ENCODE measurements at regions of chr3 and their contacts with region 1.

Region 1: GRCh38 chr3:186540221-186540834 is 3.9 kb downstream of the CRYGS start:
- DNase-seq: no peak
- ATAC-seq: peak; percentile 63

Region 2: GRCh38 chr3:186235554-186235953 is 304.8 kb before region 1 on chr3:
- intact Hi-C with region 1: no loop called
- DNase-seq: no peak
- ATAC-seq: no peak

Region 3: DNA sequence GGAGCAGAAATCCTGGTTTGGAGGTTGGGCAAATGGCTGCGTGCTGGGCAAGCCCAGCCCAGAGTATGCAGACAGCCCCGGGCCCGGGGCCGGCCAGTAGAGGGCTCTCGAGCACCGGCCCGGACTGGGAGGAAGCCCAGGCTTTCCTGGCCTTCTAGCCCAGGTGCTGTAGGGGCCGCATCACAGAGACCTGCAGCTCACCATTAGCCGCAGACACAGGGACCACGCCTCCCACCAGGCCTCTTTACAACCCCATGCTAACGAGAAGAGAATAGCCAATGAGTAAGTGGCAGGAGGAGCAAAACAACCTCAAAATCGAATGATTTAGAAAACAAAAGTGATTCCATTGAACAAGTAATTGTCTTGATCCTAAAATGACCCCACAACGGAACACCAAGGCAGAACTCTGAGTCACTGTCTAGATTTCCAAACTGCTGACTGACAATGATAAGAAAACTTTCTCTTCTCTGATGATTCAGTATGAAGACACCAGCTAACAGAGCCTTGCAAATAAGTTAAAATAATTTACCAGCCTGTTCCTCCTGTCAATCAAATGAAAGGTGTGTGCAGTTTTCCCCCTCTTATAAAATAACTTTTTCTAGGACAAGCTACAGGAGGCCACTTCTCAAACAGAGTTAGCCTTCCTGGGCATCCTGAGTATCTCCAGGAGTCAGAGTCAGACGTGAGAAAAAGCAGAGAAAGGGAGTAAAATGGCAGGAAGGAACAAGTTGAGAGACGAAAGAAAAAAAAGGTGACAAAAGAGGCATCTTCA is 280.5 kb before region 1 on chr3:
- intact Hi-C with region 1: loop called (anchors 1 kb)
- DNase-seq: peak; percentile 80
- ATAC-seq: peak; percentile 90

Measured in Right ventricle myocardium inferior (tissue), 1 donor.